ENCODE measurements at regions of chr6 and their contacts with region 1.

Region 1: GRCh38 chr6:87832025-87832825 is 130.2 kb upstream of the AKIRIN2 start:
- DNase-seq: no peak
- ATAC-seq: peak in 1 of 4 donors; percentile 54
- H3K4me3 ChIP-seq: peak overlapping the region; percentile 45
- H3K27ac ChIP-seq: no peak overlapping the region
- H3K4me1 ChIP-seq: no peaks in the 10 kb centered on the region
- H3K27me3 ChIP-seq: no peaks in the 10 kb centered on the region
- CTCF ChIP-seq: peak; percentile 34

Region 2: DNA sequence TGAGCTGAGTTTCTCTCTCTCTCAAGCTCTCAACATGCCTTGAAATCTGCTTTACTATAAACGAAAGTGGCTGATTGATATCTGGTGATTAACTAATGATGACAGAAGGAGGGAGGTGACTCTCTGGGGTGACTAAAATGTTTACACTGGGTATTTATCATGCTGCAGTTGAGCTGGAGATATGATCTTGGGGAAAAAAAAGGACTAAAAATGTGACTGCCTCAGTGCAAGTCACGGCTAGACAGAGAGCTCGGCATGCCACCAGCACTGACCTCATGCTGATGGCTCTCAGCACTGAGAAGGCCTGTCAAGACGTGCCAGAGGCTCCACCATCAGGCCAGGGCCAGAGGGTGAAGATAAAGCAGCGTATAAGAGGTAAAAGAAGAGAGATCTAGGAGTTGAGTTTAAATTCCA is 112.3 kb after region 1 on chr6:
- intact Hi-C with region 1: loop called in 1 of 2 experiments (anchors 10 kb)
- DNase-seq: peak; percentile 75 to 89
- ATAC-seq: peak; percentile 97 to 99 (median 98)
- H3K4me3 ChIP-seq: no peak overlapping the region
- H3K27ac ChIP-seq: peak overlapping the region; percentile 18
- H3K4me1 ChIP-seq: peaks cover 15% of the 10 kb centered on the region
- H3K27me3 ChIP-seq: no peaks in the 10 kb centered on the region
- CTCF ChIP-seq: peak; percentile 48